ENCODE measurements at regions of chr16 and their contacts with region 1.

Region 1: DNA sequence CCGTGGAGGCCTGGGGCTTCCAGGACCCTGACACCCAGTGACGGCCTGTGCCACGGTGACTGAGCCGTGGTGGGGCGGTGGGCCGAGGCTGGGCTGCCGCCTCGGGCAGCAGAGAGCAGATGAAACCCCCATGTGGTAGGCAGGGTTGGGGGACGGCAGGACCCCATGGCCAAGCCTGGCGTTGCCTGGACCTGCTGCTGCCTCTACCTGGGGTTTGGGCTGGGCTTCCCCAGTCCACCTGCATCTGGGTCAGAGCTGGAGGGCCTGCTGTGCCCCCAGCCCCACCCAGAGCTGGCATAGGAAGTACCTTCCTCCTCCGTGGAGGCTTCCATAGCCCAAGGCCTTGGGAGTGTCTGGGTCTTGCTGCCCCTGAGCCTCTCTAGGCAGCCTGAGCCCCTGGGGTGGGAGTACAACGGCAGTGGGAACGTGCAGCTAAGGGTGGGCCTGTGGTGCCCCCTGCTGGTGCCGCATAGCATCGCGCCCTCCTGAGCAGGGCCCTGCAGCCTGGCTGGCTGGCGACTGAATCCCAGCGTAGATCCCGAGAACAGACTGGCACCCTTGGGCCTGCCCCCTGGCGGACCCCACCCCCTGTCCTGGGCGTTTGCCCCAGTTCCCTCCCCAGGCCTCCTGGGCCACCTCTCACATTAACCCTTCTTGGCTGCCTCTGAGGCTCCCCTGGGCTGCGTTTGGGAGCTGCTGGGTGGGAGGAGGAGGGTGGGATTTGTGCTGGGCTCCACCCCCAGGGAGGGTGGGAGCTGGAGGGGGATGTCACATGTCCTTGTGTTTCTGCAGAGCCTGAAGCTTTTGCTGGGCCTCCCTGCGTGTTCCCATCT is 12.6 kb upstream of the ATP6V0C start:
- DNase-seq: peak; percentile 87
- ATAC-seq: peak; percentile 99
- H3K4me3 Mint-ChIP-seq: no peak overlapping the region
- H3K27ac Mint-ChIP-seq: no peak overlapping the region
- H3K4me1 Mint-ChIP-seq: no peaks in the 10 kb centered on the region
- H3K27me3 Mint-ChIP-seq: no peaks in the 10 kb centered on the region
- CTCF ChIP-seq: peak; percentile 89

Region 2: DNA sequence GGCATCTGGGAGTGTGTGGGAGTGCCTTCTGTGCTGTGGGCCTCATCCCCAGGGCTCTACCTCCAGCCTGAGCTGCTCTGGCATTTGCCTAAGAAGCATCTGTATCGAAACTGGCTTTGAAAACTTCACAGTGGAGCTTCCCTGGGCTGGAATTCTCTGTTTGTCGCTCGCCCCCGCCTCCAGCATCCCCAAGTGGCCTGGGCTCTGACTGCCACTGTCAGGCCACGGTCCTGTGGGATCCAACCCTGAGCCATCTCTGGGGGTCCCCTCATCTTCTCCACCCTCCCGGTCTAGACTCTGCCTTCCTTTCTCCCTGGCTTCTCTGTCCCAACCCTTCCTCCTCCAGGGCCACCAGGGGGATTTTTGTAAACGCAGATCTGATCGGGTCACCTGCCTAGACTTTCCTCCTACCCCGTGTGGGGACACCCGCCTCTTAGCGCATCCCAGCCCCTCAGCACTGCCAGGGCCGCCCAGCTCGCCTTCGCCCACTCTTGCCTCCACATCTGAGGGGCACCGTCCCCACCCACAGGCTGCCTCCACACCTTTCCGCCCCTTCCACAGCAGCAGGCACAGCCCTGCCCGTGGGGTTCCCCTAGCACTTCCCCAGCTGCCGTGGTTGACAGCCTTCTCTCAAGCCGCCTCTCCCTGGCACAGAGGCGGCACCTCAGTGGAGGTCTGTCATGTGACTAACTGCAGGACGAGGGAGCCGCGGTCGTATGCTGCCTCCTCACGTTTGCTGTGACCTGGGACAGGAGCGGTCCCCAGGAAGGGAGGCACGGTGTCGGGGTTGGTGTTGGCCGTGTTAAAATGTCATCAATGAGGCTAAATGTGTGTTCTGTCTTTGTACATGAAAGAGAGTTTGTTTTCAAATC is 14.3 kb before region 1 on chr16:
- CTCF ChIA-PET with region 1: interaction called, 10 read pairs
- POLR2A ChIA-PET with region 1: no interaction called
- intact Hi-C with region 1: no loop called
- DNase-seq: peak; percentile 91
- ATAC-seq: peak; percentile 96
- H3K4me3 Mint-ChIP-seq: peak overlapping the region; percentile 26
- H3K27ac Mint-ChIP-seq: peak overlapping the region; percentile 48
- H3K4me1 Mint-ChIP-seq: peaks cover 21% of the 10 kb centered on the region
- H3K27me3 Mint-ChIP-seq: no peaks in the 10 kb centered on the region
- CTCF ChIP-seq: peak; percentile 53

Region 3: DNA sequence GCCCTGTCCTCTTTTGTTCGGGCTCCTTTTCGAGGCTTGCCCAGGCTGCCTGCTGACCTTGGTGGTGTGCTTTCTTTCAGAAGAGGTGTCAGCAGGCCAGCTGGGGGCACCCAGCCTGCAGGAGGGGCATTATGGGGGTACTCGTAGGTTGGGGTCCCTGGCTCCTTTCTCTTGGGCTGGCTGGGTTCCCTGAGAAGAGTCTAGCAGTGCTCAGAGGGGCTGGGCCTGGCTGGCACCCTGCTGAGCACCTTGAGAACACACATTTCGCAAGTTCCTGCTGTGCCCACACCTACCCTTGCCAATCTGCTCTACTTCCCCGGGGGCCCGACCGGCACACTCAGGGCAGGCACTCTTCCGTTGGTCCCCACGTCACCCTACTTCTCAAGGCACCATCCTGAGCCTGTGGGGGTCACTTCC is 25.0 kb after region 1 on chr16:
- CTCF ChIA-PET with region 1: no interaction called
- POLR2A ChIA-PET with region 1: no interaction called
- intact Hi-C with region 1: no loop called
- DNase-seq: no peak
- ATAC-seq: no peak
- H3K4me3 Mint-ChIP-seq: no peak overlapping the region
- H3K27ac Mint-ChIP-seq: no peak overlapping the region
- H3K4me1 Mint-ChIP-seq: peaks cover 8% of the 10 kb centered on the region
- H3K27me3 Mint-ChIP-seq: no peaks in the 10 kb centered on the region
- CTCF ChIP-seq: no peak